ENCODE measurements at regions of chr9 and their contacts with region 1.

Region 1: GRCh38 chr9:91949946-91950664 is at the start of gene ROR2:
- DNase-seq: peak; percentile 86 to 87
- H3K4me3 ChIP-seq: peak within 1 kb of the TSS; percentile 24 to 71 (median 58)
- H3K27ac ChIP-seq: peak within 1 kb of the TSS; percentile 61 to 85 (median 80)
- H3K4me1 ChIP-seq: peaks cover 16 to 27% of the 10 kb centered on the region in 2 donors
- H3K27me3 ChIP-seq: no peaks in the 10 kb centered on the region
- CTCF ChIP-seq: peak in 4 of 6 experiments; percentile 28 to 93 (median 90)
- POLR2A ChIP-seq: peak in 1 of 2 donors; percentile 76
- total RNA-seq, gene ROR2: 9.5 to 17.7 (median 15.9) TPM

Region 2: DNA sequence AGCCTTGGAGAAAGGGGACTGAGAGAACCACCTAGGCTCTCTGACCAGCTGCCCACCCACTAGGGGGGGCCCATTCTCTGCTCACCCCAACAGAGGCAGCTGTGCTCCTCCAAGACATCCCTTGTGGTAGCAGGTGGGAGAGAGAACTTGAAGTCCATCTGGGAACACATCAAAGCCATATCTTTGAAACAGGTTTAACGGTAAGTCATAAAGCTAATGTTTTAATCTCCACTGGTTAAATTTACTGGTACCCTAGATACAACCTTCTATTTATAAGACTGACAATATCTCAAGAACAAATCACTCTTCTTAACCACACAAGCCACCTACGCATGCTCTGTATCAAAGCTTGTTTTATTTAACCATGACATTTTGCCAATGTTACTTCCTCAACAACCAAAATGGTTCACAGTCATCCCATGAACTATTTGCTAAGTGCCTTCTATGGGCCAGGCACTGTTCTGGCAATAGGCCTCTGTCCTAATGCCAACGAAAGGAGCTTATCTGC is 608.8 kb before region 1 on chr9:
- intact Hi-C with region 1: no loop called
- DNase-seq: no peak
- H3K4me3 ChIP-seq: no peak overlapping the region
- H3K27ac ChIP-seq: no peak overlapping the region
- H3K4me1 ChIP-seq: peaks cover 7 to 10% of the 10 kb centered on the region in 2 donors
- H3K27me3 ChIP-seq: no peaks in the 10 kb centered on the region
- CTCF ChIP-seq: no peak
- POLR2A ChIP-seq: no peak

Region 3: DNA sequence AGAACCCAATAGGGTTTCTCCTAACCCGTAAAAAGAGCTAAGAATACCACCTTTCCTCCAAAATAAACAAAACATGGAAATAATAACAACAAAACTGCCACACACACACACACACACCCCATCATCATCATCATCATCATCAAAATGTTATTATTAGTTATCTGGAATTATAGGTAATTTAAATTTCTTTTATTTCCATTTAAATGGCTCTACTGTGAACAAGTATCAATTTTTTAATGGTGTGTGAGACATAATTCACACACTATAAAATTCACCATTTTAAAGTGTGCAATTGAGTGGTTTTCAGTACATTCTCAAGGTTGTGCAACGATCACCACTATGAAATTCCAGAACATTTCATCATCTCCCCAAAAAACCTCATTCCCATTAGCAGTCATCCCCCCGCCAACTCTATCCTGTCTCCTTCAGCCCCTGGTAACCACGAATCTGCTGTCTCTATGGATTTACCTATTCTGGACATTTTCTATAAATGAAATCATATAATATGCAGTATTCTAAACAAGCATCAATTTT is 172.7 kb before region 1 on chr9:
- intact Hi-C with region 1: loop called (anchors 2 kb)
- DNase-seq: no peak
- H3K4me3 ChIP-seq: no peak overlapping the region
- H3K27ac ChIP-seq: no peak overlapping the region
- H3K4me1 ChIP-seq: peaks cover 3 to 12% of the 10 kb centered on the region in 2 donors
- H3K27me3 ChIP-seq: no peaks in the 10 kb centered on the region
- CTCF ChIP-seq: no peak
- POLR2A ChIP-seq: no peak

Region 4: DNA sequence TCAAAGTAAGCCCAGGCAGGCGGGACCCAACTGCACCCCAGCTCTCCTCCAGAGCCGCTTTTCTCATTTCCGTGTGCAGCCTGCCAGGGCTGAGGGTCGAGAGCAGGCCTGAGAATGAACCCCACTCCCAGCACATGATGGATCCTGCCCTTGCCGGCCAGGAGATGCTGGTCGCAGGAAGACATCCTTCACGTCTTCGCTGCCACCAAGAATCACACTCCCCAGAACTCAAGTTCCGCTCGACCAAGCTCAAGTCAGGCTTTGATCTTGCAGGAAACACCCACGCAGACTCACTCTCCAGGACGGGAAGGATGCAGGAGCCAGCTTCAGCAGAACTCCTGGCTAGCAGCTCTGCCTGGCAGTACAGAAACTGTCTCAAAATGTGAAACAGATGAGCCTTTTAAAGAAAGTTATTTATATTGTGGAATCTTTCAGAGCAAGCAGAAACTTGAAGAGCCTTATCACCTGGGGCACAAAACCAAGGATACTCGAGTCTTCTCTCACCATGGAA is 102.5 kb before region 1 on chr9:
- intact Hi-C with region 1: loop called (anchors 10 kb)
- DNase-seq: peak; percentile 84 to 87
- H3K4me3 ChIP-seq: no peak overlapping the region
- H3K27ac ChIP-seq: no peak overlapping the region
- H3K4me1 ChIP-seq: peaks cover 9 to 25% of the 10 kb centered on the region in 2 donors
- H3K27me3 ChIP-seq: no peaks in the 10 kb centered on the region
- CTCF ChIP-seq: no peak
- POLR2A ChIP-seq: no peak

Region 5: GRCh38 chr9:92369075-92369474 is 419.0 kb after region 1 on chr9:
- intact Hi-C with region 1: no loop called
- DNase-seq: no peak
- H3K4me3 ChIP-seq: no peak overlapping the region
- H3K27ac ChIP-seq: no peak overlapping the region
- H3K4me1 ChIP-seq: no peaks in the 10 kb centered on the region
- H3K27me3 ChIP-seq: no peaks in the 10 kb centered on the region
- CTCF ChIP-seq: no peak
- POLR2A ChIP-seq: no peak